Heart right ventricle (tissue), 16 donors: ENCODE measurements at regions of chr7 and their contacts with region 1.

Region 1: GRCh38 chr7:88101769-88102168 is 118.1 kb downstream of the SRI start:
- DNase-seq: no peak
- ATAC-seq: no peak
- H3K4me3 ChIP-seq: no peak overlapping the region
- H3K27ac ChIP-seq: no peak overlapping the region
- H3K4me1 ChIP-seq: peaks cover 0 to 16% (median 0%) of the 10 kb centered on the region in 9 donors
- H3K27me3 ChIP-seq: no peaks in the 10 kb centered on the region
- CTCF ChIP-seq: no peak

Region 2: GRCh38 chr7:87354749-87355148 is 747.0 kb before region 1 on chr7:
- intact Hi-C with region 1: loop called in 1 of 10 experiments (anchors 10 kb)
- DNase-seq: no peak
- ATAC-seq: no peak
- H3K4me3 ChIP-seq: no peak overlapping the region
- H3K27ac ChIP-seq: no peak overlapping the region
- H3K4me1 ChIP-seq: no peaks in the 10 kb centered on the region
- H3K27me3 ChIP-seq: no peaks in the 10 kb centered on the region
- CTCF ChIP-seq: no peak

Region 3: DNA sequence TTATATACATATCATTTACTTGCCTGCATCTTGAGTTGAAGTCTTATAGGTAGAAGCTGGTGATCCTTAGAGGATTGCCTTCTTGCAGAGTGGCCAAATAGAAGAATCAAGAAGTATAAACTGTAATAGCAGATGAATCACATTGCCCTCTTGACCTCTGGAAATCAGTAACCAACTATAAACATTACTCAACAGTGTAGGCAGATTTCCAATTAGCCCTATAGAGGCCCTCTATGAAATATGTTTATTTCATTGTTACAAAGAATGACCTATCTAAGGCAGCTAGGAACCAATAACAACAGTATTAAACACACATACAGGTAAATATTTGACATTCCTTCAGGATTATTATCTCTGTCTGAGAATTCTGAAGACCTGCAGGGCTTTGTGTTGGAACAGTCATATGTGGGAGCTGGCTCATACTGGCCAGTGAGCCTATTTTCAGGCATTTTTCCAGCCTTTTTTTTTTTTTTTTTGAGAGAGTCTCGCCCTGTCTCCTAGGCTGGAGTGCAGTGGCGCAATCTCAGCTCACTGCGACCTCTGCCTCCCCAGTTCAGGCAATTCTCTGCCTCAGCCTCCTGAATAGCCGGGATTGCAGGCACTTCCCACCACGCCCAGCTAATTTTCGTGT is 125.2 kb after region 1 on chr7:
- intact Hi-C with region 1: no loop called
- DNase-seq: no peak
- ATAC-seq: no peak
- H3K4me3 ChIP-seq: no peak overlapping the region
- H3K27ac ChIP-seq: no peak overlapping the region
- H3K4me1 ChIP-seq: peaks cover 0 to 9% (median 0%) of the 10 kb centered on the region in 9 donors
- H3K27me3 ChIP-seq: no peaks in the 10 kb centered on the region
- CTCF ChIP-seq: no peak